MCF 10A (cell line): ENCODE measurements at regions of chr15 and their contacts with region 1.

Region 1: DNA sequence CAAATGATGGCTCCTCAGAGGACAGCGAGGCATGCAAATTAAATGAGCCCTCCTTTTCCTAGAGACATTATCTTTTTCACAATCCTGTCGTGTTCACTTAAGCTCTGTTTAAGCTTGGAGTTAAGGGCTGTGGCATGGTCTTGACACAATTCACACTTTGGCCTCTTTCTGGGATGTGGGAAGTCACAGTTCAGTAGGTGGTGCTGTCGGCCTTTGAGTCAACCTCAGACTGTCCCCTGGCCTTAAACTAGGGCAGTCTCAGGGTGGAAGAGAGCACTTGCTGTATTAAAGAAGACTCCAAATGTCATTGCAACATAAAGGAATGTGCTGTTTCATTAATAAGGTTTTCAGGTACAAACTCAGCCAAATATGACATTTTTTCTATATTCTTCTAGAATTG is 351.0 kb downstream of the MCTP2 start:
- DNase-seq: peak; percentile 62
- H3K4me3 Mint-ChIP-seq: no peak overlapping the region
- H3K27ac Mint-ChIP-seq: no peak overlapping the region
- H3K4me1 Mint-ChIP-seq: no peaks in the 10 kb centered on the region
- H3K27me3 Mint-ChIP-seq: no peaks in the 10 kb centered on the region
- CTCF ChIP-seq: peak; percentile 51

Region 2: DNA sequence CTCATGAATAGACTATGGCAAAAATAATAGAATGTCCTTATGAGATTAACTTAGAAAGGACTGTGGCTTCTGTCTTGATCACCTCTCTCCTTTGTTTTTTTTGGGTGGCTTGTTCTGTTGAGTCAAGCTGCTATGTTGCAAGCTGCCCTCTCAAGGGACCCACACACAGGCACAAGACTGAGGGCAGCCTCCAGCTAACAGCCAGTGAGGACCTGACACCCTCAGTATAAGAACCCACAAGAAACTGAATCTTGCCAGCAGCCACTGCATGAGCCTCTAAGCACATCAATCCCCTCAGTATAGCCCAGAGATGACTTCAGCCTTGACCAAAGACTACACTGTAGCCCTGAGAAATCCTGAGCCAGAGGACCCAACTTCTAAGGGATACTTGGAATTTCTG is 10.1 kb after region 1 on chr15:
- CTCF ChIA-PET with region 1: interaction called, 13 read pairs
- POLR2A ChIA-PET with region 1: no interaction called
- intact Hi-C with region 1: no loop called
- DNase-seq: peak; percentile 8
- H3K4me3 Mint-ChIP-seq: no peak overlapping the region
- H3K27ac Mint-ChIP-seq: no peak overlapping the region
- H3K4me1 Mint-ChIP-seq: no peaks in the 10 kb centered on the region
- H3K27me3 Mint-ChIP-seq: no peaks in the 10 kb centered on the region
- CTCF ChIP-seq: no peak